ENCODE measurements at regions of chrX and their contacts with region 1.

Region 1: GRCh38 chrX:118116713-118117550 is at the start of gene KLHL13:
- DNase-seq: peak; percentile 74
- total RNA-seq, gene KLHL13: 15.5 TPM

Region 2: DNA sequence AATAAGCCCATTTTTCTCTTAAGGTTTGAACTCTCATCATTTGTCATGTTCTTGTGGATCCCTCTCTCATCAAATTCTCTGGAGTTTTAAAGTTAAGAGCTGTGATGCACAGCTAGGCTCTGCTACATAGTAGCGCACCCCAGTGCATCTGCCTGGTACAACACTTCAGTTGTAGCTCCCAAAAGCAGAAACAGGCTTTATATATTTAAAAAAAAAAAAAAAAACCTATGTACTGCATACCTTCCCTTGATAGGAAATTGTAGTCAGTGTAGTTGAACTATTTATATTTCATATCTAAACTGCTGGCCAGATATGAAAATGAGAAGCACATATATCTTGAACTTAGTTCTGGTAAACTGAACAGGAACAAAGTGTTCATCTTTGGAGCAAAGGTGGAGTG is 131.7 kb before region 1 on chrX:
- intact Hi-C with region 1: no loop called
- DNase-seq: no peak

Region 3: DNA sequence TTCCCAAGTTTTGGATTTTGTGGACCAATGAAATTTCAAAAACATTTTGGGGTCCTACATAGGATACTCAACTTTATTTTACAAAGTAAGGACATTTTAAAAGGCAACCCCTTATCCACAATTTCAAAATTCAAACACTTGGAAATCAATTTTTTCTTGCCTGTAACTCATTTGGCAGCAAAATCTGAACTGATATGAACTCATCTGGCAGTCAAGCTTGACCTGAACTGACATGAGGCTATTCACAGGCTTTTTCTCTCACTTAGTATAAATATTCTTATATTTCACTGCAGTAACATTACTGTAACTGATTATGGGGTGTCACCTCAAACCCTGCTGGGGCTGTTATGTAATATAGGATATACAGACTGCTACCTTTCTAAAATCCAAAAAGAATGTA is 116.4 kb before region 1 on chrX:
- intact Hi-C with region 1: no loop called
- DNase-seq: no peak

Region 4: DNA sequence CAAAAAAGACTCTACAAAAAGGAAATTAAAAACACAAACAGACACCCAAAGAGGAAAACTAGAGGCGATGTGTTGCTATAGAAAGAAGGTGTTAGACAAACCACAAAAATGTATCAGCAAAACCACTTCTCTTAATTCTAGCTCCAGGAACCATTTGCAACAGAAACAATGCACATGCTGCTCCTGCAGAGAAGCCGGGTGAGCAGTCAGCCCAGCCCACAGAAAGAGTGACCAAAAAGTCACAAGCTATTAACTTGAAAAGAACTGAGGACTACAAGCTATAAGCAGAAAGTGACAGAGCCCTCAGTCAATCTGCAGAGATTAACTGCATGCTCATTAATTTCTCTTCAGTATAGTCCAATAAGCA is 95.9 kb after region 1 on chrX:
- intact Hi-C with region 1: loop called (anchors 10 kb)
- DNase-seq: no peak